Left colon (tissue), 2 donors: ENCODE measurements at regions of chr11 and their contacts with region 1.

Region 1: DNA sequence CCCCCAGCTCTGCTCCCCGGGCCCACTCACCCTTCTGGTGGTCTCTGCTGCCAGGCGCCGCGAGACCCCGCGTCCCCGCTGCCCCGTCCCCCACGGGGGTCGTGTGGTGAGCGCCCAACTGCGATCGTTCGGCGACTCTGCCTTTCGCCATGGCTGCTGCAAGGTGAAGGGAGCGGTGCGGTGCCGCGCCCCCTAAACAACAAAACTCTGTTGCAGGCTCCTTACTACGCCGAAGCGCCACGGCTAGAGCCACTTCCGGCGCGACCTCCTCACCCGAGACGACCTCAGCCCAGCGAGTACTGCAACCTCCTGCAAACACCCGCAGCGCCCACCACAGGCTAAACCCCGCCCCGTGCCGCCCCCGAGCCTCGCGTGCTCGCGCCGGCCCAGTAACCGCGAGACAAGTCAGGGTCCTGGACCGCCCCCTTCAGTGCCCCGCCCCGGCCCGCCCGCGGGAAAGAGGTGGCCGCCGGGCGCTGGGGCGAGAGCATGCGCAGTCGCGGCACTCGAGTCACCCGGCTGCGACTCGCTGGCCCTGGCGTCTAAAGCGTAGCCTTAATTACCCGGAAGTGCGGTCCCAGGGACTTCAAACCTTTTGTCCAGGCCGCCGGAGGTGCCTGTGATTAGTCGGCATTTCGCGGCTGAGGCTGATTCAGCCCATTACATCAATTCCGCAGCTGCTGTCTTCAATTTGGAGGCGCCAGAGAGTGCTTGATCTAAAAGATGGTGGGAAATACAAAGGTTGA is at the start of gene TMEM41B:
- DNase-seq: peak; percentile 98 to 99
- ATAC-seq: peak; percentile 93
- total RNA-seq, gene TMEM41B: 58.0 to 62.8 TPM

Region 2: DNA sequence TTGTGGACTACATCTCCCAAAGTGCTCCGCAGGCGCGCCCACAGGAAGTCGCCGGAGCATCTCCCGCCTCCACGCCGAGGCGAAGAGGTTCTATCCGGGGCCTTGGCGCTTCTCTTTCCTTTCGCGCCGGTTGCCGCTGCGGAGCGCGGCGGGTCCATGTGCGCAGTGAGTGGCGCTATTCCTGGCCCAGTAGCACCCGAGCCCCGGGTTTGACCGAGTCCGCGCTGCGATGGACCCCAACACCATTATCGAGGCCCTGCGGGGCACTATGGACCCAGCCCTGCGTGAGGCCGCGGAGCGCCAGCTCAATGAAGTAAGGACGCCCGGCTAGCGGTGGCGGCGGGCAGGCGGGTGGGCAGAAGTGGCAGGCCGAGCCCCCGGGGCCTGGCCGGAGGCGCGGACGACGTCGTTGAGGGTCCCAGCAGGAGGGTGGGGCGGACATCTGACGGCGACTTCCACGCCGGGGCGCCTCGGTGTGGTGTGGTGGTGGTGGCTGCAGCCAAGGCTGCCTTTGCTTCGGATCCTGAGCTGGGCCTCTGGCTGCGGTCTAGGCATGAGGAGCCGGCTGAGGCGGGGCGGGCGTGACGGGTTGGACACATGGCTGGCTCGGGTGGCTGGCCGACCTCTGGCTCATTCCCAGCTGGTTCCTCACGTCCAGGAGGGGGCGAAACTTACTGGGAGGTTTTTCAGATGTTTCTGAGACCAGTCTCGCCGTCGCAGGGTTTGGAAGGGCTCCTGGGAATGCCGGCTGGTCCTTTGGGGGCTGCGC is 70.3 kb after region 1 on chr11 and contains the start of gene IPO7:
- intact Hi-C with region 1: loop called in 1 of 2 experiments (anchors 10 kb)
- DNase-seq: peak; percentile 92 to 93
- ATAC-seq: peak; percentile 94
- total RNA-seq, gene IPO7: 70.6 to 72.2 TPM